CD8-positive, alpha-beta T cell (primary cell): ENCODE measurements at regions of chr4 and their contacts with region 1.

Region 1: GRCh38 chr4:26372525-26373172 is 51.8 kb downstream of the RBPJ start:
- DNase-seq: peak; percentile 13 to 84 (median 43)
- ATAC-seq: peak; percentile 81
- H3K4me3 ChIP-seq: no peak overlapping the region
- H3K4me3 Mint-ChIP-seq: no peak overlapping the region
- H3K27ac ChIP-seq: no peak overlapping the region
- H3K27ac Mint-ChIP-seq: no peak overlapping the region
- H3K4me1 ChIP-seq: peaks cover 16% of the 10 kb centered on the region
- H3K4me1 Mint-ChIP-seq: peaks cover 34% of the 10 kb centered on the region
- H3K27me3 ChIP-seq: peaks cover 0 to 2% of the 10 kb centered on the region in 2 experiments
- H3K27me3 Mint-ChIP-seq: peaks cover 2% of the 10 kb centered on the region
- CTCF ChIP-seq: no peak

Region 2: DNA sequence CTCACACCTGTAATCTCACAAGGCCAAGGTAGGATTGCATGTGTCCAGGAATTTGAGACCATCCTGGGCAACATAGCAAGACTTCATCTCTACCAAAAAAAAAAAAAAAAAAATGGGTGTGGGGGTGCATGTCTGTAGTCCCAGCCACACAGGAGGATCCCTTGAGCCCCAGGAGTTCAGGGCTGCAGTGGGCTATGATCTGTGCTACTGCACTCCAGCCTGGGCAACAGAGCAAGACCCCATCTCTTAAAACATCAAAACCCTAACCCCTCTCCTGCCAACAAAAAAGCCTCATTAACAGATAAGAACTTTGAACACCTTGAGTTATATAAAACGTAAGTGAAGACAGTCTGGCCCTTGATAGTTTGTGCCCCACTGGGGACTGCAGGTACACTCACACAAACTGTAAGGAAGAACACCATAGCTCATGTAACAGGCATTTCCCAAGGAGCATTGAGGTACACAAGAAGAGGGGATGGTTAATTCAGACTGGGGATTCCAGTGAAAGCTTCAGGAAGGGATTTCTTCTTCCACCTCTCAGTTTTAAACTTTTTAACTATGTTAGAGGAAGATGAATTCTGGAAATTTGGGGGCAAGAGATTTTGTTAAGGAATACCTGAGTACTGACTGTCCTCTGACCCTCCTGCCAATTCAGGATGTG is 17.1 kb before region 1 on chr4:
- CTCF ChIA-PET with region 1: interaction called, 3 read pairs
- POLR2A ChIA-PET with region 1: interaction called, 4 read pairs
- intact Hi-C with region 1: loop called in 1 of 2 experiments (anchors 2 kb)
- DNase-seq: no peak
- ATAC-seq: no peak
- H3K4me3 ChIP-seq: no peak overlapping the region
- H3K4me3 Mint-ChIP-seq: no peak overlapping the region
- H3K27ac ChIP-seq: no peak overlapping the region
- H3K27ac Mint-ChIP-seq: no peak overlapping the region
- H3K4me1 ChIP-seq: peaks cover 14% of the 10 kb centered on the region
- H3K4me1 Mint-ChIP-seq: peaks cover 26% of the 10 kb centered on the region
- H3K27me3 ChIP-seq: no peaks in the 10 kb centered on the region
- H3K27me3 Mint-ChIP-seq: no peaks in the 10 kb centered on the region
- CTCF ChIP-seq: no peak

Region 3: GRCh38 chr4:26386386-26386785 is 13.7 kb after region 1 on chr4:
- CTCF ChIA-PET with region 1: no interaction called
- POLR2A ChIA-PET with region 1: no interaction called
- intact Hi-C with region 1: loop called in 1 of 2 experiments (anchors 2 kb)
- DNase-seq: no peak
- ATAC-seq: no peak
- H3K4me3 ChIP-seq: no peak overlapping the region
- H3K4me3 Mint-ChIP-seq: no peak overlapping the region
- H3K27ac ChIP-seq: no peak overlapping the region
- H3K27ac Mint-ChIP-seq: no peak overlapping the region
- H3K4me1 ChIP-seq: no peaks in the 10 kb centered on the region
- H3K4me1 Mint-ChIP-seq: peaks cover 19% of the 10 kb centered on the region
- H3K27me3 ChIP-seq: no peaks in the 10 kb centered on the region
- H3K27me3 Mint-ChIP-seq: no peaks in the 10 kb centered on the region
- CTCF ChIP-seq: no peak